ENCODE measurements at regions of chr3 and their contacts with region 1.

Region 1: DNA sequence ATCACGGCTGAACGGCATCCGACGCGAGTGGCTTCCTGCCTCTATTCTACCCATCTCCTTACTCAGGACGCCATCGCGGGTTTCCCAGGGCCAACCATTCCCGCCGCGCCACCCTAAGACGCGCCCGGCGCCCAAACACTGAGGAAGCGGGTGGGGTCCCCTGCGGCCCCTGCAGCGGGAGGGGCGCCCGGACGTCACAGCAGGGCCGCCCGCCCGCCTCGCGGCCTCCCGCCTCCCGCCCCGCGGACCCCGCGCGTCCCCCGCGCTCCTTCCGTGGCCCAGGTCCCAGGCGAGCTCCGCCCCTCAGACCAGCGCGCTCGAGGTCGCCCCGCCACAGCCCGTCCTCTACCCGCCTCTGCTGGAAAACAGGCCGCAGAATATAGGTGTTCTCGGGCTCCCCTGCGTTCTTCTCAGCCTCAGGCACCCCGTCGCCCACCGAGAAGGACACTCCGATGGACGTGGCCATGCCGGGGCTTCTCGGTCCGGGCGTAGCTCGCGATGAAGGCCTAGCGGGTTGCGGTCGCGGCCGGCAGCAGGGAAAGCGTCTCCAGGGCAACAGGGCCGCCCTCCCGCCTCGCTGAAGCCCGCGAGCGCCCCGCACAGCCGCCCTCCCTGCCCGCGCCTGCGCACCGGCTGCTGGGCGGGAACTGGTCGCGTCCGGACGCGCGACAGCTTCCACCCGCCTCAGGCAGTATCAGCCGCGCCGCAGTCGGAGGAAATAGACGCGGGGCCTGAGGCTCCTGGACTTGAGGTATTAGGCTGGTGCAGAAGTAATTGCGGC is at the start of gene DYNLT2B:
- DNase-seq: peak; percentile 93
- ATAC-seq: peak; percentile 91
- H3K4me3 ChIP-seq: peak within 1 kb of the TSS; percentile 44 to 85 (median 76)
- H3K4me3 Mint-ChIP-seq: peak within 1 kb of the TSS; percentile 96
- H3K27ac ChIP-seq: peak within 1 kb of the TSS; percentile 85 to 89
- H3K27ac Mint-ChIP-seq: peak within 1 kb of the TSS; percentile 97
- H3K4me1 ChIP-seq: peaks cover 0 to 10% of the 10 kb centered on the region in 2 donors
- H3K4me1 Mint-ChIP-seq: peaks cover 10% of the 10 kb centered on the region
- H3K27me3 ChIP-seq: no peaks in the 10 kb centered on the region
- H3K27me3 Mint-ChIP-seq: no peaks in the 10 kb centered on the region
- CTCF ChIP-seq: no peak
- total RNA-seq, gene DYNLT2B: 5.6 and 6.5 TPM in 2 replicates

Region 2: DNA sequence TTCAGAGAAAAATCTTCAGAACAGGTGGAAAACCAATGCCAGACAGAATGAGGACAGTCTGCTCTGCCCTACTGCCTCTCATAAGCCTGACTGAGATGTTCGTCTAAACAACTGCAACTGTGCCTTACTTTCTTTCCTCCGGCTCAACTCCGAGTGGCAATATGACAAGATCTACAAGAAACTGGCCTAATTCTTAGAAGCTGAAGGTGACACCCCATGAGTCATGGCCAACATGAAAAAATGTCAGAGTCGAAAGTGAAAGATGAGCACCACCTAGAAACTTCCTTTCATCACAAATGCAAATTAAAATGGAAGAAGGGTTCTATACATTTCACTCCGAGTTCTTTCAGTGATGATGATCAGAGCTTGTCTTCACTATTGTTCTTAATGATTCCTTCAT is 43.3 kb before region 1 on chr3:
- CTCF ChIA-PET with region 1: no interaction called
- POLR2A ChIA-PET with region 1: no interaction called
- intact Hi-C with region 1: loop called (anchors 1 kb)
- DNase-seq: peak; percentile 54
- ATAC-seq: peak; percentile 81
- H3K4me3 ChIP-seq: peak overlapping the region in 2 of 5 experiments; percentile 6
- H3K4me3 Mint-ChIP-seq: peak overlapping the region; percentile 69
- H3K27ac ChIP-seq: peak overlapping the region; percentile 57 to 68
- H3K27ac Mint-ChIP-seq: peak overlapping the region; percentile 87
- H3K4me1 ChIP-seq: peaks cover 4 to 17% of the 10 kb centered on the region in 2 donors
- H3K4me1 Mint-ChIP-seq: peaks cover 24% of the 10 kb centered on the region
- H3K27me3 ChIP-seq: no peaks in the 10 kb centered on the region
- H3K27me3 Mint-ChIP-seq: no peaks in the 10 kb centered on the region
- CTCF ChIP-seq: no peak

Region 3: DNA sequence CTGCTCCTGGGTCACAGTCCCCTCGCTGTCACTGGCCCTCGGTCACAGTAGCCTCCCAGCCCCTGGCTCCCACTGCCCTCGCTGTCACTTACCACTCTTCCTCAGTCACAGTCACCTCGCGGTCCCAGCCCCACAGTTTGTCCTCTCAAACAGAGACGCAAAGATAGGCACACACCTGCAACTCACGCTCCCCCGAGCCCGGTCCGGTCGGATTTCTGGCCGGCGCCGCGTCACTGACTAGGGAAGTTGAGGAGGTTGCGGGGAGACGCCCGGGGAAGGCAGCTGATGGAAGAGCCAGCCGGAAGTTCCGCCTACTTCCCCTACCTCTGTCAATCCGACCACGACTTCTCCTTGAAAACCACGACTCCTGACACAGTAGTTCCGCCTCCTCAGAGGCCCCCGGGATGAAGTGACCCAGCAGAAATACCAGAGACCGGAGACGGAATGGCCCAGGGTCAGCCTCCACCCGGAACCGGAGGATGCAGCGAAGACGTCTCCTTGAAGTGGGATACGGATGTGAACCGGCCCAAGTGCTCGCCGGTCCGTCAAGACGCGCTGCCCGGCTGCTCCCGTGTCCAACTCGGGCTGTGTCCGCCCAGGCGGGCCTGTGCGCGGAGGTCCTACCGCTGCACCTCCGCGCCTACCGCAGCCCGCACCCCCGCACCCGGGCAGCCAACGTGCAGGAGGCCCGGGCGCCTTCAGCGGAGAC is 30.3 kb before region 1 on chr3 and contains the start of gene PCYT1A:
- CTCF ChIA-PET with region 1: interaction called, 4 read pairs
- POLR2A ChIA-PET with region 1: interaction called, 11 read pairs
- intact Hi-C with region 1: loop called (anchors 1 kb)
- DNase-seq: peak; percentile 87
- ATAC-seq: peak; percentile 78
- H3K4me3 ChIP-seq: peak within 1 kb of the TSS; percentile 68 to 98 (median 96)
- H3K4me3 Mint-ChIP-seq: peak within 1 kb of the TSS; percentile 100
- H3K27ac ChIP-seq: peak within 1 kb of the TSS; percentile 70 to 92
- H3K27ac Mint-ChIP-seq: peak within 1 kb of the TSS; percentile 98
- H3K4me1 ChIP-seq: peaks cover 17 to 36% of the 10 kb centered on the region in 2 donors
- H3K4me1 Mint-ChIP-seq: peaks cover 58% of the 10 kb centered on the region
- H3K27me3 ChIP-seq: no peaks in the 10 kb centered on the region
- H3K27me3 Mint-ChIP-seq: no peaks in the 10 kb centered on the region
- CTCF ChIP-seq: no peak
- total RNA-seq, gene PCYT1A: 59.9 and 61.2 TPM in 2 replicates

Region 4: DNA sequence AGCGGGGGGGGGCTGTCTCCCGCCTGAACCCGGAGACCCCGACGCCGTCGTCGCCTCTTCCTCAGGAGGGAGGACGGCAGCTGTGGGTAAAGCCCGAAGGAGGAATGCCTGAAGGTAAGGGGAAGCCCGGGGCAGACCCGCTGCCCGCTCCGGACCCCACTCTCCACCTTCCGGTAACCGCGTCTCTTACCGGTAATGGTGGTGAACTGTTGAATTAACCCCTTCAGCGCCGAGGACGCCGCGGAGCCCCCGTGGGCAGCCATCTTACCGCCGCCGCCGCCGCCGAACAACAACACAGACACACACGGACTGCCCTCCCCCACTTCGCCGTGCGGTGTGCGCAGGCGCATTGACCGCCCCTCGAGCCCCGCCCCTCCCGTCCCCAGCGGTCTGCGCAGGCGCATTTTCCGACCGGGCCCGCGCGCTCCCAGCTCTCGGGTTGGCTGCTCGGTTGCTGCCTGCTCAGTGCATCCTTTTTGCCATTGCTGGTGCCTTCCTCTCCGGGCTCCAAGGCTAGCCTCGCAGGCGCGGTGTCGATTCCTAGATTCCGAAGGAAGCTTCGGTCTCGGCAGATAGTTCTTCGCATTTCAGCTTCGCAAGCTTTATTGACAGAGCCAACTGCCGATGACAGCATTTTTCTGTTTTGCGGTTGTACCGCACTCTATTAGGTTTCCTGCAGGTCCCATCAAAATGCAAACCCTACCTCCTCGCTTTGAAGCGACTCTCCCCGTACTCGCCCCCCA is 114.4 kb after region 1 on chr3 and contains the start of gene UBXN7:
- CTCF ChIA-PET with region 1: no interaction called
- POLR2A ChIA-PET with region 1: interaction called, 3 read pairs
- intact Hi-C with region 1: loop called (anchors 1 kb)
- DNase-seq: peak; percentile 97
- ATAC-seq: peak; percentile 84
- H3K4me3 ChIP-seq: peak within 1 kb of the TSS; percentile 77 to 100 (median 93)
- H3K4me3 Mint-ChIP-seq: peak within 1 kb of the TSS; percentile 75
- H3K27ac ChIP-seq: peak within 1 kb of the TSS; percentile 88 to 90
- H3K27ac Mint-ChIP-seq: peak within 1 kb of the TSS; percentile 69
- H3K4me1 ChIP-seq: peaks cover 7 to 19% of the 10 kb centered on the region in 2 donors
- H3K4me1 Mint-ChIP-seq: peaks cover 20% of the 10 kb centered on the region
- H3K27me3 ChIP-seq: no peaks in the 10 kb centered on the region
- H3K27me3 Mint-ChIP-seq: no peaks in the 10 kb centered on the region
- CTCF ChIP-seq: no peak
- total RNA-seq, gene UBXN7: 107 and 114 TPM in 2 replicates

Region 5: GRCh38 chr3:196774191-196774820 is 456.4 kb after region 1 on chr3:
- CTCF ChIA-PET with region 1: no interaction called
- POLR2A ChIA-PET with region 1: no interaction called
- intact Hi-C with region 1: no loop called
- DNase-seq: no peak
- ATAC-seq: no peak
- H3K4me3 ChIP-seq: no peak overlapping the region
- H3K4me3 Mint-ChIP-seq: no peak overlapping the region
- H3K27ac ChIP-seq: peak overlapping the region in 1 of 2 donors; percentile 40
- H3K27ac Mint-ChIP-seq: peak overlapping the region; percentile 50
- H3K4me1 ChIP-seq: peaks cover 20 to 29% of the 10 kb centered on the region in 2 donors
- H3K4me1 Mint-ChIP-seq: peaks cover 67% of the 10 kb centered on the region
- H3K27me3 ChIP-seq: no peaks in the 10 kb centered on the region
- H3K27me3 Mint-ChIP-seq: no peaks in the 10 kb centered on the region
- CTCF ChIP-seq: no peak

Measured in B cell (primary cell).